HCT116 (cell line): ENCODE measurements at regions of chr1 and their contacts with region 1.

Region 1: GRCh38 chr1:5620990-5621389 is 371.2 kb downstream of the NPHP4 start:
- DNase-seq: peak; percentile 15
- ATAC-seq: peak; percentile 91
- H3K4me3 ChIP-seq: no peak overlapping the region
- H3K27ac ChIP-seq: no peak overlapping the region
- H3K4me1 ChIP-seq: no peaks in the 10 kb centered on the region
- H3K27me3 ChIP-seq: peaks cover 22% of the 10 kb centered on the region; the same call in 1 of the 2 replicates
- CTCF ChIP-seq: peak; percentile 57 to 79 (median 74); a peak in 5 of 6 replicates
- POLR2A ChIP-seq: no peak
- RAD21 ChIP-seq: peak; percentile 75

Region 2: GRCh38 chr1:3910857-3911845 is 1709.8 kb before region 1 on chr1:
- CTCF ChIA-PET with region 1: no interaction called
- POLR2A ChIA-PET with region 1: no interaction called
- RAD21 ChIA-PET with region 1: no interaction called
- intact Hi-C with region 1: loop called (anchors 2 kb)
- DNase-seq: peak; percentile 54
- ATAC-seq: peak; percentile 93
- H3K4me3 ChIP-seq: peak overlapping the region in 1 of 2 experiments; percentile 40; a peak in 3 of 4 replicates
- H3K27ac ChIP-seq: no peak overlapping the region
- H3K4me1 ChIP-seq: peaks cover 2 to 9% of the 10 kb centered on the region in 2 experiments; a peak in 3 of 4 replicates
- H3K27me3 ChIP-seq: no peaks in the 10 kb centered on the region
- CTCF ChIP-seq: peak; percentile 62 to 90 (median 89); a peak in 5 of 6 replicates
- POLR2A ChIP-seq: no peak
- RAD21 ChIP-seq: peak; percentile 96

Region 3: DNA sequence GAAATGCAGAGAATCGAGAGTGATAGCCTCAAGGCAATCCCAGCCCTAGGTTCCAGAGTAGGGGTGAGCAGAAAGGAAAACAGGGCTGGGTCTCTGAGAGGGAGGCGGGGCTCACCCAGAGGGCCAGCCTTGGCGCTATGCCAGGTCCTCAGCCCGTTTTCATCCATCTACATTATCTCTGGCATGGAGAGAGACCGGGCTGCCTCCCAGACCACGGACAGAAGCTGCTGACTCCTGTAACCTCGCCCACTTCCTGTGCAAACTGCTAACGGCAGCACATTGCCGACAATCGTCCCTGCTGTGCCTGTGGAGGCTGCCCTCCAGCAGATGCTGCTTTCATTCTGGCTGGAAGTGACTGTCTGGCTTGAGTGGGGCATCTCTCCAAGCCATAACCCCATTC is 197.9 kb before region 1 on chr1:
- CTCF ChIA-PET with region 1: no interaction called
- POLR2A ChIA-PET with region 1: no interaction called
- RAD21 ChIA-PET with region 1: no interaction called
- intact Hi-C with region 1: no loop called
- DNase-seq: no peak
- ATAC-seq: no peak
- H3K4me3 ChIP-seq: no peak overlapping the region
- H3K27ac ChIP-seq: no peak overlapping the region
- H3K4me1 ChIP-seq: peaks cover 0 to 10% of the 10 kb centered on the region in 2 experiments; a peak in 1 of 4 replicates
- H3K27me3 ChIP-seq: no peaks in the 10 kb centered on the region; the same call in 1 of the 2 replicates
- CTCF ChIP-seq: no peak
- POLR2A ChIP-seq: no peak
- RAD21 ChIP-seq: no peak